PC-9 (cell line): ENCODE measurements at regions of chr2 and their contacts with region 1.

Region 1: GRCh38 chr2:230053753-230054478 is 14.8 kb downstream of the SLC16A14 start:
- DNase-seq: peak; percentile 54 to 90
- H3K4me3 ChIP-seq: peak overlapping the region; percentile 15; the same call in 1 of the 2 replicates
- H3K27ac ChIP-seq: peak overlapping the region; percentile 84
- H3K4me1 ChIP-seq: peaks cover 31% of the 10 kb centered on the region
- H3K27me3 ChIP-seq: no peaks in the 10 kb centered on the region
- CTCF ChIP-seq: no peak

Region 2: GRCh38 chr2:230018153-230018552 is 35.8 kb before region 1 on chr2:
- CTCF ChIA-PET with region 1: no interaction called
- POLR2A ChIA-PET with region 1: interaction called, 12 read pairs
- intact Hi-C with region 1: no loop called
- DNase-seq: peak in 1 of 2 experiments; percentile 34
- H3K4me3 ChIP-seq: no peak overlapping the region
- H3K27ac ChIP-seq: no peak overlapping the region
- H3K4me1 ChIP-seq: no peaks in the 10 kb centered on the region
- H3K27me3 ChIP-seq: no peaks in the 10 kb centered on the region
- CTCF ChIP-seq: no peak

Region 3: DNA sequence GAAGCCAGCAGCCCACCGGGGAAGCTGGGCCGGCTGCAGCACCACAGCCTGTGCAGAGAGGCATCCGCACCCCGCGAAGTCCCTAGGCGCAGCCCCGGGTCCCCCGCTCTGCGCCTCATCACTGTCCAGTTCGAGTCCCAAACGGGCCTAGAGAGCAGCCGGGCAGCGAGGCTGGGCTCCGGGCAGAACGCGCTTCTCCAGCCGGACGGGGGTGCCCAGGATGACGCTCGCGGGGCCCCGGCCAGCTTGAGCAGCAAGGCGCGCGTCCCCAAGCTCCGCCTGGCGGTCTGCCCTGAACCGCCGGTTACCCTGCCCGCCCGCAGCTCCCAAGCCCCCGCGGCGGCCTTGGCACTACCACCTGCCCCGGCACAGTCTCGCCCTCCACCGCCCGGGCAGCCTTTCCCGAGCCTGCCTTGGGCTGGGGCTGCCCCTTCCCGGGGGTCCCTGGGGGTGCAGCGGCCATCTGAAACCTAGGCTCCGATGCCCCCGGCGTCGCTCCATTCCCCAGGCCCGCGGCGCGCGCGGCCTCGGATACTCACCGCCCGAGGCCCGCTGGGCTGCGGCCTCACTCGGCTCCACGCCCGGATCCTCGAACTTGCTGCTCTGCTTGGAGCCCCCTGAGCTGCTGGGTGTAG is 14.2 kb after region 1 on chr2:
- CTCF ChIA-PET with region 1: interaction called, 4 read pairs
- POLR2A ChIA-PET with region 1: interaction called, 6 read pairs
- intact Hi-C with region 1: loop called (anchors 1 kb)
- DNase-seq: peak in 1 of 2 experiments; percentile 42
- H3K4me3 ChIP-seq: peak overlapping the region; percentile 77
- H3K27ac ChIP-seq: no peak overlapping the region
- H3K4me1 ChIP-seq: no peaks in the 10 kb centered on the region
- H3K27me3 ChIP-seq: no peaks in the 10 kb centered on the region
- CTCF ChIP-seq: 0 out of 2 replicates have a peak, but pooled peaks have one; percentile 23

Region 4: GRCh38 chr2:230418341-230419016 is 364.6 kb after region 1 on chr2:
- CTCF ChIA-PET with region 1: no interaction called
- POLR2A ChIA-PET with region 1: no interaction called
- intact Hi-C with region 1: loop called (anchors 2 kb)
- DNase-seq: peak; percentile 40 to 44
- H3K4me3 ChIP-seq: peak overlapping the region; percentile 58; the same call in 1 of the 2 replicates
- H3K27ac ChIP-seq: peak overlapping the region; percentile 38
- H3K4me1 ChIP-seq: peaks cover 30% of the 10 kb centered on the region
- H3K27me3 ChIP-seq: no peaks in the 10 kb centered on the region
- CTCF ChIP-seq: no peak

Region 5: GRCh38 chr2:230485801-230486341 is 432.0 kb after region 1 on chr2:
- CTCF ChIA-PET with region 1: interaction called, 13 read pairs
- POLR2A ChIA-PET with region 1: no interaction called
- intact Hi-C with region 1: no loop called
- DNase-seq: no peak
- H3K4me3 ChIP-seq: no peak overlapping the region
- H3K27ac ChIP-seq: no peak overlapping the region
- H3K4me1 ChIP-seq: no peaks in the 10 kb centered on the region
- H3K27me3 ChIP-seq: no peaks in the 10 kb centered on the region
- CTCF ChIP-seq: no peak